ENCODE measurements at regions of chr15 and their contacts with region 1.

Region 1: DNA sequence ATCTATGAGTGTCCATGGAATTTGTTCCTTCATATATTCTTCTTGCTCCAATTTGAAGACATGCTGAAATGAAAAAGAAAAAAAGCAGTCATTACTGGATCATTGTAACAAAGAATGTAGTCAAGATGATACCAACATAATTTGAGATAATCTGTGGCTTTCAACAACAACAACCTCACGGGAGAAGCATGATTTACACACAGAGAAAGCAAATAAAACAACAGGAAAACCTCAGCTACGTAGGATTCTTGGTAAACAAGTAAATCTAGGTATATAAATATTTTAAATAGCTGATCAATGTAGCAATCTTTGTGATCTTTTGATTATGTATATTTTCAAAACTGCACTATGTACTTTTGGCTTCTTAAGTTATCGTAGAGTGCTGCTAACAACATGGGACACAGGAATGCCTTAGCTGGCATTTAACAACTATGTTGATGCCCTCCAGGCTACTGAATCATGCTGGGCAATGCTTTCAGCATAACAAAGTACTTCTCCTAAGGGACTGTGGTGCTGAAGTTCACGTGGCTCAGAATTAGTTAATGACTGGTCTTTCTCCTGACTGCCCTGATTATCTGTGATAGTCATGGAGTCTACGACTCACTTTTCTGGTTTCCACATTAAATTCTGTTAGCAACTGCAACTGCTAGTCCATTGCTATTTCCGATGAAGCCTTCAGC is 96.5 kb upstream of the MYO5C start:
- DNase-seq: no peak

Region 2: GRCh38 chr15:52349052-52349700 is 43.0 kb before region 1 on chr15:
- intact Hi-C with region 1: loop called (anchors 10 kb)
- DNase-seq: no peak